ENCODE measurements at regions of chr2 and their contacts with region 1.

Region 1: GRCh38 chr2:234500394-234501006 is 3.6 kb upstream of the ARL4C start:
- DNase-seq: peak in 1 of 2 donors; percentile 77
- H3K4me3 ChIP-seq: no peak overlapping the region
- H3K27ac ChIP-seq: no peak overlapping the region
- H3K4me1 ChIP-seq: peaks cover 3 to 6% of the 10 kb centered on the region in 2 donors
- H3K27me3 ChIP-seq: no peaks in the 10 kb centered on the region
- CTCF ChIP-seq: peak in 2 of 3 experiments; percentile 31 to 56

Region 2: GRCh38 chr2:233976690-233977294 is 523.7 kb before region 1 on chr2:
- intact Hi-C with region 1: loop called (anchors 5 kb)
- DNase-seq: no peak
- H3K4me3 ChIP-seq: no peak overlapping the region
- H3K27ac ChIP-seq: no peak overlapping the region
- H3K4me1 ChIP-seq: no peaks in the 10 kb centered on the region
- H3K27me3 ChIP-seq: no peaks in the 10 kb centered on the region
- CTCF ChIP-seq: no peak

Region 3: DNA sequence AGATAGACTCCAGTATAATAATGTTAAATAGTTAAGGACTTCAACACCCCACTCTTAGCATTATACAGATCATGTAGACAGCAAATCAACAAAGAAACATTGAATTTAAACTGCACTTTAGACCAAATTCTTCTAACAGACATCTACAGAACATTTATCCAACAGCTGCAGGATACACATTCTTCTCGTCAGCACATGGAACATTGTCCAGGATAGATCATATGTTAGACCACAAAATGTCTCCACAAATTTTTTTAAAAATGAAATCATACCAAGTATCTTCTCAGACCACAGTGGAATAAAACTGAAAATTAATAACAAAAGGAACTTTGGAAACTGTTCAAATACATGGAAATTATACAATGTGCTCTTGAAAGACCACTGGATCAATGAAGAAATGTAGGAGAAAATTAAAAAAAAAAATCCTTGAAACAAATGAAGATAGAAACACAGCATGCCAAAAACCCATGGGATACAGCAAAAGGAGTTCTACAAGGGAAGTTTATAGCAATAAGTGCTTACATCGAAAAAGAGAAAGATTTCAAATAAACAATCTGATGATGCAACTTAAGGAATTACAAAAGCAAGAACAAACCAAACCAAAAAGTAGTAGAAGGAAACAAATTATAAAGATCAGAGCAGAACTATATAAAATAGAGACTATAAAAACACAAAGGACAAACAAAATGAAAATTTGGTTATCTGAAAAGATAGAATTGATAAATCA is 462.3 kb before region 1 on chr2:
- intact Hi-C with region 1: no loop called
- DNase-seq: no peak
- H3K4me3 ChIP-seq: no peak overlapping the region
- H3K27ac ChIP-seq: no peak overlapping the region
- H3K4me1 ChIP-seq: no peaks in the 10 kb centered on the region
- H3K27me3 ChIP-seq: no peaks in the 10 kb centered on the region
- CTCF ChIP-seq: no peak

Region 4: GRCh38 chr2:234135720-234136221 is 364.7 kb before region 1 on chr2:
- intact Hi-C with region 1: loop called (anchors 2 kb)
- DNase-seq: peak in 1 of 2 donors; percentile 66
- H3K4me3 ChIP-seq: no peak overlapping the region
- H3K27ac ChIP-seq: no peak overlapping the region
- H3K4me1 ChIP-seq: no peaks in the 10 kb centered on the region
- H3K27me3 ChIP-seq: no peaks in the 10 kb centered on the region
- CTCF ChIP-seq: peak in 2 of 3 experiments; percentile 33 to 52

Region 5: GRCh38 chr2:234288974-234289455 is 211.5 kb before region 1 on chr2:
- intact Hi-C with region 1: loop called (anchors 2 kb)
- DNase-seq: peak in 1 of 2 donors; percentile 75
- H3K4me3 ChIP-seq: no peak overlapping the region
- H3K27ac ChIP-seq: peak overlapping the region in 1 of 2 donors; percentile 39
- H3K4me1 ChIP-seq: no peaks in the 10 kb centered on the region
- H3K27me3 ChIP-seq: no peaks in the 10 kb centered on the region
- CTCF ChIP-seq: peak; percentile 45 to 61 (median 58)

Region 6: DNA sequence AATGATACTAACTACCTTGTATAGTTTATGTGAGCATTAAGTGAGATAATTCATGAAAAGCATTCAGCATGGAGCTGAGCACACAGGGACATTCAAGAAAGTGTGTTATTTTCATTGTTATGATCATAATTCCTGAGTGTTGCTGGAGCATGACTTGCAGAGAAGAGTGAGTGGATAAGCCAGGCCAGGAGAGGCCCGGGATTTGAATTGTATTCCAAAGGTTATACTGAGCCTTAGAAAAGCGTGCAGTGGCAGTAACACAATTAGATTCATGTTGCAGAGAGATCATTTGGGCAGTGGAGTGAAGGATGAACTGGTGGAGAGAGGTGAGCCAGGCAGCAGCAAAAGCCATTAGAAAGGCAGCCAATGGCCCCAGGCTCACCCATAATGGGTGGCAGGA is 308.4 kb after region 1 on chr2:
- intact Hi-C with region 1: no loop called
- DNase-seq: no peak
- H3K4me3 ChIP-seq: no peak overlapping the region
- H3K27ac ChIP-seq: no peak overlapping the region
- H3K4me1 ChIP-seq: no peaks in the 10 kb centered on the region
- H3K27me3 ChIP-seq: no peaks in the 10 kb centered on the region
- CTCF ChIP-seq: no peak

Measured in ascending aorta (tissue), 2 donors.